MCF 10A (cell line): ENCODE measurements at regions of chr5 and their contacts with region 1.

Region 1: DNA sequence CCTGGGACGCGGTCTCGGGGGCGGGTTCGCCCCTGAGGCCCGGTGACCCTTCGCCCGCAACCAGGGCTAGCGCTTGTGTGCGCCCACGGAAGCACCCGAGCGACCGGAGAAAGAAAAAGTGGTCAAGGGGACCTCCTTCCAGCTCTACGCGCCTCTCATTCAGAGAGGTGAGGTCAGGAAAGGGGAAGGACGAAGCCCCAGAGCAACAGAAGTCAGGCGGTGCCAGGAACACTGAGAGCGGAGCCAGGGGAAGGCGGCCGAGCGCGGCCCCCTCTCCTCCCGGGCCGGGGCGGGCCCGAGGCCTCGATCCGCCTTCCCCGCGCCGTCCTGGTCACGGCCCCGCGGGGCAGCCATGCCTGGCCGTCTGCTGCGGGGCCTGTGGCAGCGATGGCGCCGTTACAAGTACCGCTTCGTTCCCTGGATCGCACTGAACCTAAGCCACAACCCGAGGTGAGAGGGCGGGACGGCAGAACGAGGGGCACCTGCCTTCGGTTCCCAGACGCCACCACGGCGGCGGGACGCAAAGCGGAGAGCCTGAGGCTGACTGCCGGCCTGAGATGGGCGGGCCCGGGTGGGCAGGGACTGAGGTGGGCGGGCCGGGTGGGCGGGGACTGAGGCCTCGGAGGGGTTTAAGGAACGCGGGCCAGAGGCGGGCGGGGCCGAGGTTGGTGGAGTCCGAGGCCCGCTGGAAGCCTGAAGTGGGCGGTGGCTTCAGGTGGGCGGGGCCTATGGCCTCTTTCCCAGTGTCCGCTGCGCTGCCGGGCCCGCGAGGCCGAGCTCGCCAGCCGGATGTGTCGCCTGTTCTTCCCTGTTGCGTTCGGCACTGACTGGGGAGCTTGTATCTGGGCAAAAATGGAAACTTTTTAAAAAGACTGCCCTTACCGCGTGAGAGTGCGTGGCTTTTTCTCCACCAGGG is at the start of gene SETD9:
- DNase-seq: peak; percentile 97
- H3K4me3 Mint-ChIP-seq: peak within 1 kb of the TSS; percentile 99
- H3K27ac Mint-ChIP-seq: peak within 1 kb of the TSS; percentile 99
- H3K4me1 Mint-ChIP-seq: peaks cover 8% of the 10 kb centered on the region
- H3K27me3 Mint-ChIP-seq: no peaks in the 10 kb centered on the region
- CTCF ChIP-seq: no peak
- total RNA-seq, gene SETD9: 10.6 and 11.5 TPM in 2 replicates

Region 2: GRCh38 chr5:56893251-56893951 is 16.2 kb before region 1 on chr5:
- CTCF ChIA-PET with region 1: interaction called, 6 read pairs
- POLR2A ChIA-PET with region 1: interaction called, 17 read pairs
- intact Hi-C with region 1: no loop called
- DNase-seq: no peak
- H3K4me3 Mint-ChIP-seq: no peak overlapping the region
- H3K27ac Mint-ChIP-seq: no peak overlapping the region
- H3K4me1 Mint-ChIP-seq: no peaks in the 10 kb centered on the region
- H3K27me3 Mint-ChIP-seq: no peaks in the 10 kb centered on the region
- CTCF ChIP-seq: no peak

Region 3: GRCh38 chr5:56951946-56952691 is 42.6 kb after region 1 on chr5 and contains the start of gene MIER3:
- CTCF ChIA-PET with region 1: no interaction called
- POLR2A ChIA-PET with region 1: interaction called, 44 read pairs
- intact Hi-C with region 1: no loop called
- DNase-seq: peak; percentile 73
- H3K4me3 Mint-ChIP-seq: peak within 1 kb of the TSS; percentile 88
- H3K27ac Mint-ChIP-seq: peak within 1 kb of the TSS; percentile 56
- H3K4me1 Mint-ChIP-seq: peaks cover 14% of the 10 kb centered on the region
- H3K27me3 Mint-ChIP-seq: peaks cover 13% of the 10 kb centered on the region
- CTCF ChIP-seq: no peak
- total RNA-seq, gene MIER3: 17.8 and 25.0 TPM in 2 replicates

Region 4: DNA sequence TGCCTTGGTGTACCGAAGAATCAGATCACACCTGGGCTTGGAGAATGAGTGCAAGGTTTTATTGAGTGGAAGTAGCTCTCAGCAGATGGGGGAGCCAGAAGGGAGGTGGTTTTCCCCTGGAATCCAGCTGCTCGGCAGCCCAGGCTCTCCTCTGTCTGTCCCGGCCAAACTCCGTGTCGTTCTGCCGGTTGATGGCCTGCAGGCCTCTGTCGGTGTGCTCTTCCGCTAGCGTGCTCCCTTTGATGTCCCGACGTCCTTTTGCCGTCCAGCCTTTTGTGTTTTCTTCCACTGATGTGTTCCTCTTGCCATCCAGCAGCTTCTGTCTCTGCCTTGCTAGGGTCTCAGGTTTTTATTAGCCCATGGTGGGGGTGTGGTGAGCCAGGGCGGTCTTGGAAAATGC is 70.4 kb after region 1 on chr5:
- CTCF ChIA-PET with region 1: no interaction called
- POLR2A ChIA-PET with region 1: no interaction called
- intact Hi-C with region 1: no loop called
- DNase-seq: no peak
- H3K4me3 Mint-ChIP-seq: no peak overlapping the region
- H3K27ac Mint-ChIP-seq: no peak overlapping the region
- H3K4me1 Mint-ChIP-seq: no peaks in the 10 kb centered on the region
- H3K27me3 Mint-ChIP-seq: no peaks in the 10 kb centered on the region
- CTCF ChIP-seq: no peak

Region 5: GRCh38 chr5:57173185-57174127 is 263.9 kb after region 1 on chr5 and contains the start of gene GPBP1:
- CTCF ChIA-PET with region 1: interaction called, 3 read pairs
- POLR2A ChIA-PET with region 1: interaction called, 30 read pairs
- intact Hi-C with region 1: no loop called
- DNase-seq: peak; percentile 99
- H3K4me3 Mint-ChIP-seq: peak within 1 kb of the TSS; percentile 97
- H3K27ac Mint-ChIP-seq: peak within 1 kb of the TSS; percentile 99
- H3K4me1 Mint-ChIP-seq: peaks cover 10% of the 10 kb centered on the region
- H3K27me3 Mint-ChIP-seq: no peaks in the 10 kb centered on the region
- CTCF ChIP-seq: no peak
- total RNA-seq, gene GPBP1: 63.6 and 66.5 TPM in 2 replicates

Region 6: DNA sequence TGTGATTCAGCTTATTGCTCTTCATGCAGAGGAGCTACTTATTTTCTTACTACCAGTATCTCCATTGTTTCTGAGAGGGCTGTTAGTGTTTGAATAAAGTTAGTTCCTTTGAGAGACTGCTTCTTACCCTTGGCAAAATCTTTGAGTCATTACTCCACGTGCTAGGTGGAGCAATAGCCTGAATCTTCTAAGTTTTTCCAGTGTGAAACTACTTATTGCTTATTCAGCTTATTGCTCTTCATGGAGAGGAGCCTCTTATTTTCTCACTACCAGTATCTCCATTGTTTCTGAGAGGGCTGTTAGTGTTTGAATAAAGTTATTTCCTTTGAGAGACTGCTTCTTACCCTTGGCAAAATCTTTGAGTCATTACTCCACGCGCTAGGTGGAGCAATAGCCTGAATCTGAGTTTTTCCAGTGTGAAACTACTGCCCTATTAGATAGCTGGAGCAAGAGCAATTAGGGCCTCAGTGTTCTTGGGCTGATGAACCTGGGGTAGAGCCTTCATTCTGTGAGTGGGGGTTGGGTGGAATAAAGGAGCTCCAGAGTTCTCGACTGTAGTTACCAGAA is 306.2 kb after region 1 on chr5:
- CTCF ChIA-PET with region 1: no interaction called
- POLR2A ChIA-PET with region 1: interaction called, 16 read pairs
- intact Hi-C with region 1: no loop called
- DNase-seq: peak; percentile 47
- H3K4me3 Mint-ChIP-seq: peak overlapping the region; percentile 63
- H3K27ac Mint-ChIP-seq: peak overlapping the region; percentile 85
- H3K4me1 Mint-ChIP-seq: peaks cover 19% of the 10 kb centered on the region
- H3K27me3 Mint-ChIP-seq: no peaks in the 10 kb centered on the region
- CTCF ChIP-seq: no peak